MCF 10A (cell line): ENCODE measurements at regions of chr1 and their contacts with region 1.

Region 1: DNA sequence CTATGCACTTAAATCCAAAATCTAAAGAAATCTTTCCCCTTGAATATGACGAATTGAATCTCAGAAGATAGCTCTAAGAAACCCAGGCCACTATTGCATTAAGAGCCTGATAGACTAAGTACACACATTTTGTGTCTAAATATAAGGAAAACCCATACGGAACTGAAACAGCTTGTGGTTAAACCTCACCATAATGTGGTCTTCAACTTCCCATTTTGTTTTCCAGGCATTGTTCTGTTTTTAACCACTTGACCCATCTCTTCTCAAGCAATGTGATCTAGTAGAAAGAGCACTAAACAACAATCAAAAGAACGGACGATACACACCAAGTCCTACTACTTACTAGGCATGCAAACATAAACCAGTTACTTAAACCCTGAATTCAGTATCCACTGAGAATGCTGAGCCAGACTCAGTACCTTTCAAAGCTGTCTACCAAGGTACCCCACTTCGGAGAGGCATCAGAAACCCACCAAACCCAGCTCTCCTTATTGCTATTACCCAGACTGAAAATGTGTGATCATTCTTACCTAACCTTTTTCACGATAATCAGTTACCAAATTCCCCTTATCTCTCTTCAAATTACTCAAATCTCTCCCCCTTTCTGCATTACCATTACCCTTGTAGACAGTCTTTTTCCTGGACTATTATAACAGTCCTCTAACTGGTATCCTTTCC is 12.8 kb downstream of the OTUD7B start:
- DNase-seq: no peak
- H3K4me3 Mint-ChIP-seq: no peak overlapping the region
- H3K27ac Mint-ChIP-seq: no peak overlapping the region
- H3K4me1 Mint-ChIP-seq: peaks cover 43% of the 10 kb centered on the region
- H3K27me3 Mint-ChIP-seq: no peaks in the 10 kb centered on the region
- CTCF ChIP-seq: no peak

Region 2: GRCh38 chr1:149978547-149979023 is 19.1 kb before region 1 on chr1:
- CTCF ChIA-PET with region 1: interaction called, 3 read pairs
- POLR2A ChIA-PET with region 1: interaction called, 25 read pairs
- intact Hi-C with region 1: no loop called
- DNase-seq: peak; percentile 59
- H3K4me3 Mint-ChIP-seq: no peak overlapping the region
- H3K27ac Mint-ChIP-seq: peak overlapping the region; percentile 5
- H3K4me1 Mint-ChIP-seq: peaks cover 13% of the 10 kb centered on the region
- H3K27me3 Mint-ChIP-seq: no peaks in the 10 kb centered on the region
- CTCF ChIP-seq: no peak

Region 3: DNA sequence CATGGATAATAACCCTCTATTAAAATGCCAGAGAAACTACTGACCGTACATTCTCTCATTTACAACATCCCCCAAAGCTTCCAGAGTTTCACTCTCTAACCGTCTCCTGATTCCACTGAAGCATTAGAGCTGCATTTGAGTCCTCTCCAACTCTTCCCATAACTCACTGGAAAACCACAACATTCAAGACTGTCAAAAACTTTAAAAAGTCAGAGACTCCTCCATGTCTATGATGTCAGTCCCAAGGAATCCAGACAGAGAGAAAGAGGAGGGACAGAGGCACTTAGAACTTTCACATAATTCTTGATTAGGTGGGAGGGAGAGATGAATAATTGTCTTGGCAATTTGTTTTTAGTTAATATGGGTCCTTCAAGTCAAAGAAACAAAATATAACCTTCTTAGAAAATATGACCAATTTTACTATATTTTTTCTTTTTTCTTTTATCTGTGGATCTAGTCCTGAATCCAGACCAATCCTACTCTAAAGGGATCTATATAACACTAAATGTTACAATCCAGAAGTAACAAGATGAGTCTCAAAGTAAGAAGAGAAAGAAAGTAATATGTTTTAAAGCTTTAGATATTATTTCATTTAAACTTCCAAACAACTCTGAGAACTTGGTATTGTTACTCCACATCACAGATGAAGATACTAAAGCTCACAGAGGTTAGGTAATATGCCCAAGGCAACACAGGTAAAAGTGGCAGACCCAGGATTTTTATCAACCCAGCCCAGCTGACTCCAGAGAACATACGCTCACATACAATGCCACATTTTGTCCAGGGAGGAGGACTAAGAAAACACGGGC is 11.0 kb before region 1 on chr1:
- CTCF ChIA-PET with region 1: no interaction called
- POLR2A ChIA-PET with region 1: interaction called, 30 read pairs
- intact Hi-C with region 1: no loop called
- DNase-seq: peak; percentile 46
- H3K4me3 Mint-ChIP-seq: no peak overlapping the region
- H3K27ac Mint-ChIP-seq: peak overlapping the region; percentile 6
- H3K4me1 Mint-ChIP-seq: peaks cover 29% of the 10 kb centered on the region
- H3K27me3 Mint-ChIP-seq: no peaks in the 10 kb centered on the region
- CTCF ChIP-seq: no peak